Transverse colon (tissue), 4 donors: ENCODE measurements at regions of chr14 and their contacts with region 1.

Region 1: DNA sequence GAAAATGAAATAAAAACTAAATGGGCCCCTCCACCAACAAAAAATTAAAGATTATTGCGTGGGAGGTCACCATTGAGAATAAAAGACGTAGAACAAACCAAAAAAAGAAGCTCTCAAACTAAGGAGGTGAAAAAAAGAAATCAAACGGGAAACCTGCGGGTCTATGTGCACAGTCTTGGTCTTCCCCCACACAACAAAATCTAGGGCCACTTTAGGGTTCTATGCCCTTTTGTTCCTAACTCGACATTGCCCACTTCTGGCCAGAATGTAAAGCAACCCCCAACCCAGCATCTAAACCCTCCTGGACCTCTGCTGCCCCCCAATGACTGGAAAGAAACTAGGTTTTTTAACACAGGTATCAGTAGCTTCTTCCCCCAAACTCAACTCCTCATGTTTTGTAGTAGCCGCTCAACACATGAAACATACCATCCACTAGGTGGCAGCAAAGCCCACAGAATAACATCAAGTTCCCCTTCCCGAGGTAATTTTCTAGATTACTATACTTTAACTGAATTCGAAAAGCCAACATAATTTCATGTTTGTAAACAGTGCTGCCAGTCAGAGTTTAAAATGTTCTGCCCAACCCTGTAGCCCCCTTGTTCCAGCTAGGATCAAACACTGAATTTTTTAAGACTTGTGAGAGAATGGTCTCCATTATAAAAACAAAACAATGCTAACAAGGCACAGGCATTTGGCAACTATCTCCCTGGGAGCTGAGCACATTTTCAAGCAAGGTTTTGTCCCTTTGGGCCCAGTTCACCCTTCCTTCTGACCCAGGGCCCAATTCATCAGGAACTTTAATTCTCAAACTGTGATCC is 18.7 kb downstream of the DAD1 start:
- DNase-seq: peak; percentile 81
- H3K4me3 ChIP-seq: no peak overlapping the region
- H3K27ac ChIP-seq: peak overlapping the region; percentile 58 to 63 (median 58)
- H3K4me1 ChIP-seq: peaks cover 5 to 32% (median 11%) of the 10 kb centered on the region in 4 donors
- H3K27me3 ChIP-seq: no peaks in the 10 kb centered on the region
- CTCF ChIP-seq: peak; percentile 74 to 97 (median 88)
- EP300 ChIP-seq: no peak
- POLR2A ChIP-seq: no peak

Region 2: GRCh38 chr14:22386924-22387775 is 183.2 kb before region 1 on chr14:
- in situ Hi-C with region 1: loop called in 1 of 4 experiments (anchors 25 kb)
- intact Hi-C with region 1: no loop called
- DNase-seq: peak; percentile 67
- H3K4me3 ChIP-seq: no peak overlapping the region
- H3K27ac ChIP-seq: no peak overlapping the region
- H3K4me1 ChIP-seq: peaks cover 0 to 17% (median 5%) of the 10 kb centered on the region in 4 donors
- H3K27me3 ChIP-seq: peaks cover 5% of the 10 kb centered on the region
- CTCF ChIP-seq: peak; percentile 72 to 87 (median 78)
- EP300 ChIP-seq: no peak
- POLR2A ChIP-seq: no peak

Region 3: GRCh38 chr14:22646570-22647254 is 76.4 kb after region 1 on chr14:
- in situ Hi-C with region 1: loop called in 3 of 4 experiments (anchors 5 to 10 kb)
- intact Hi-C with region 1: no loop called
- DNase-seq: no peak
- H3K4me3 ChIP-seq: no peak overlapping the region
- H3K27ac ChIP-seq: no peak overlapping the region
- H3K4me1 ChIP-seq: no peaks in the 10 kb centered on the region
- H3K27me3 ChIP-seq: no peaks in the 10 kb centered on the region
- CTCF ChIP-seq: no peak
- EP300 ChIP-seq: no peak
- POLR2A ChIP-seq: no peak

Region 4: DNA sequence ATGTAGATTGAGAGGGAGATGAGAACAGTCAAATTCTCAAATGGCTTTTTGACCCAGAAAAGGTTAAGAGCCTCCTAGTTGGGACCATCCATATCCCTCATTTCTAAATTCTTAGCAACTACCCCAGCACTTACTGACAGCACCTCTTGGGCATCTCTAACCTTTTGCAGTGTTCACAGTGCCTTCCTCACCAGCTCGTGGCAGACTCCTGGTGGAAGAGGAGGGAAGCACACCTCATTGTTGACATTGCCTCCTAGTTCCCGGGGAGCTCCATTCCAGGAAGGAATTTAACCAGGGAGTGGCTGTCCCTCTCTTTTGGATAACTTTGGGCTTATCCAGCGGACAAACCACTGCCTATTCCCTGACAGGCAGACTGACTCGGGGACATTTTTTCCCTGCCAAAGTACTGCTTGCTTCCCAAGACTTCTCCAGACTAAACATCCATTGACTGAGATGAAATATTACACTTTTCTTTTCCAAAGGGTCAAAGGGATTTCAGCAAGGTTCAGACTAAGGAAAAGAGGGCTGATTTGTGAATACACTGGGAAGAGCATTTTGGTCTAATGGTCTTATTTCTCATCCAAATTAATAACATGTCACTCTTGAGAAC is 82.8 kb after region 1 on chr14:
- in situ Hi-C with region 1: loop called in 3 of 4 experiments (anchors 5 to 10 kb)
- intact Hi-C with region 1: no loop called
- DNase-seq: peak; percentile 72
- H3K4me3 ChIP-seq: no peak overlapping the region
- H3K27ac ChIP-seq: no peak overlapping the region
- H3K4me1 ChIP-seq: peaks cover 0 to 12% (median 2%) of the 10 kb centered on the region in 4 donors
- H3K27me3 ChIP-seq: no peaks in the 10 kb centered on the region
- CTCF ChIP-seq: peak; percentile 72 to 87 (median 82)
- EP300 ChIP-seq: no peak
- POLR2A ChIP-seq: no peak

Region 5: DNA sequence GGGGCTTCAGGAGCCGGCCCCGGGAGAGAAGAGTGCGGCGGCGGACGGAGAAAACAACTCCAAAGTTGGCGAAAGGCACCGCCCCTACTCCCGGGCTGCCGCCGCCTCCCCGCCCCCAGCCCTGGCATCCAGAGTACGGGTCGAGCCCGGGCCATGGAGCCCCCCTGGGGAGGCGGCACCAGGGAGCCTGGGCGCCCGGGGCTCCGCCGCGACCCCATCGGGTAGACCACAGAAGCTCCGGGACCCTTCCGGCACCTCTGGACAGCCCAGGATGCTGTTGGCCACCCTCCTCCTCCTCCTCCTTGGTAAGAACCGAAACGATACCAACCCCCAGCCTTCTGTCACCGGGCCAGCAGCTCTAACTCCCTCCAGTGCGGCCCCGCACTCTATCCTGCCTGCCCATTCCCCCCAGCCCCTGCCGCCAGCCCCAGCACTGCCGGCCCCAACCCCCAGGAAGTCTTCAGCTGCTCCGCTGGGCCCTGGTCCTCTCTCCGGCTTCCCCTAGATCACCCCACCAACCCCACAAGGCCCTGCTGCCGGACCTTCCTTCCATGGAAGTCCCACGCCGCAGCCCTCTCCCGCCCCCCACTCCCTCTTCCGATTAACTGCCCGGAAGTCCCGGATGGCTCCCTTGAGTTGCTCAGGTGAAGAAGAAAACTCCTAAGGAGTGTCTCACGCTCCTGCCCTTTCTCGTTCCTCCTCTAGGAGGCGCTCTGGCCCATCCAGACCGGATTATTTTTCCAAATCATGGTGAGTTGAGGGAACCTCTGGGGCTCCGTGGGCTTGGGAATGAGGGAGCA is 301.9 kb after region 1 on chr14:
- in situ Hi-C with region 1: loop called in 2 of 4 experiments (anchors 25 kb)
- intact Hi-C with region 1: no loop called
- DNase-seq: peak; percentile 92
- H3K4me3 ChIP-seq: peak overlapping the region; percentile 61 to 89 (median 74)
- H3K27ac ChIP-seq: peak overlapping the region; percentile 94 to 99 (median 98)
- H3K4me1 ChIP-seq: peaks cover 19 to 29% (median 23%) of the 10 kb centered on the region in 4 donors
- H3K27me3 ChIP-seq: no peaks in the 10 kb centered on the region
- CTCF ChIP-seq: peak; percentile 92 to 99 (median 97)
- EP300 ChIP-seq: no peak
- POLR2A ChIP-seq: peak; percentile 23